Adrenal gland (tissue), 19 donors: ENCODE measurements at regions of chr3 and their contacts with region 1.

Region 1: GRCh38 chr3:126982471-126983175 is at the start of gene PLXNA1:
- DNase-seq: peak; percentile 64 to 83 (median 70)
- H3K4me3 ChIP-seq: peak within 1 kb of the TSS; percentile 37 to 98 (median 54)
- H3K27ac ChIP-seq: peak within 1 kb of the TSS in 4 of 5 donors; percentile 62 to 89 (median 74)
- H3K4me1 ChIP-seq: peaks cover 11 to 34% of the 10 kb centered on the region in 2 donors
- H3K27me3 ChIP-seq: no peaks in the 10 kb centered on the region
- CTCF ChIP-seq: peak; percentile 76 to 91 (median 86)
- POLR2A ChIP-seq: no peak
- total RNA-seq, gene PLXNA1: 9.5 to 28.4 (median 21.5) TPM

Region 2: DNA sequence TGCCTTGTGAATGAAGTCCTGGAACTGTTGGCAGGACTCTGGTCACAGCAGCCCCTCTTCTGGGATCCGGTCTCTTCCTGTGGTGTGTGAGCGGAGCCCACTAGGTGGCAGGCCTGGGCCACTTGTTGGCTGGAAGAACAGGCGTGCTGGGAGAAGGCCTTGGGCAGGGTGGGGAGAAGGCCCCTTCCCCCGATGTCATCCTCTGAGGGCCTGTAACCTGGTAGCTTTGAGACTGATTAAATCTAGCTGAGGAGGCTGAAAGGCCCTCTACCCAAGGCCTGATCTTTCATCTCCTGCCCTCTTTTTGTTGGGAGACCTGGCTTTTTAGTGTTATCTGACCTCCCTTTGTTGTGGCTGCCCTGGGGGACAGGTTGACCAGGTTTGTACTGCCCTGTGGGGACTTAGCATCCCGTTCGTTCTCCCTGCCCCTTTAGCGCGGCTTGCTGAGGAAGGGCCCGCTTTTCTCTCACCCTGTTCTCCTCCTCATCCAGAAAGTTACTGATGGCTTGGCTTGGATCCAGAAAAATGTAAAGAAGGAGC is 230.2 kb before region 1 on chr3:
- intact Hi-C with region 1: loop called (anchors 5 kb)
- DNase-seq: peak; percentile 73 to 91 (median 77)
- H3K4me3 ChIP-seq: no peak overlapping the region
- H3K27ac ChIP-seq: no peak overlapping the region
- H3K4me1 ChIP-seq: peaks cover 0 to 6% of the 10 kb centered on the region in 2 donors
- H3K27me3 ChIP-seq: no peaks in the 10 kb centered on the region
- CTCF ChIP-seq: peak; percentile 78 to 92 (median 88)
- POLR2A ChIP-seq: no peak

Region 3: DNA sequence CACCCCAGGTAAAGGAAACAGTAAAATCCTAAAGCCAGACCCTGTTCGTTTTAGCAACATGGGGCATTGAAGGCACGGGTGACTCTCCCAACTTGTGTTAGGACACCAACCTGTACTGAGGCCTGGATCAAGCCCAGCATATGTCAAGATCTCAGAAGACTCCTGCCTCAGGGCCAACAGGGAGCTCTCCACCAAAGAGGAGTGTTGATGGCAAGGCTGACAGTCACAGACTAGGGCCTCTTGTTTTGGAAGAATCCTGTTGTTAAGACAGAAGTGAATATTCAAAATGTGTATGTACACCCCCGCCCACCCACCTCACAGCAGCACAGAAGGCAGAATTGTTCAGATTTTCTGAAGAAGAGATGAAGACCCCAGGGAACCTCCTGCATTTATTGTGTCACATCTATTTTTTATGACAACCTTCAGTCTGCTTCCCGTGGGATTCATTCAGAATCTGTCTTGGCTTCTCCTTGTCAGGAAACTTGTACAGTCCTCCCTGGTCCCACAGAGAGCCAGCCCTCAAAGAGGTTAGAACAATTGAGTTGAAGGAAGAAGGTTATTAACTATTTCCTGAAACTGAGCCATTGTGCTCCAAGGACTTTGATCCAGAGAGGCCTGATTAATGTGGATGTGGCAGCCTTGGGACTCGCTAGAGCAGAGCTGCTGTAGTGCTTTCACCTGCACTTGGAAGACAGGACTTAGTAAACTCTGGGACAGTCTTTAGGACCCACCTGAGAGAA is 61.4 kb before region 1 on chr3:
- intact Hi-C with region 1: no loop called
- DNase-seq: no peak
- H3K4me3 ChIP-seq: no peak overlapping the region
- H3K27ac ChIP-seq: no peak overlapping the region
- H3K4me1 ChIP-seq: peaks cover 0 to 18% of the 10 kb centered on the region in 2 donors
- H3K27me3 ChIP-seq: no peaks in the 10 kb centered on the region
- CTCF ChIP-seq: no peak
- POLR2A ChIP-seq: no peak

Region 4: DNA sequence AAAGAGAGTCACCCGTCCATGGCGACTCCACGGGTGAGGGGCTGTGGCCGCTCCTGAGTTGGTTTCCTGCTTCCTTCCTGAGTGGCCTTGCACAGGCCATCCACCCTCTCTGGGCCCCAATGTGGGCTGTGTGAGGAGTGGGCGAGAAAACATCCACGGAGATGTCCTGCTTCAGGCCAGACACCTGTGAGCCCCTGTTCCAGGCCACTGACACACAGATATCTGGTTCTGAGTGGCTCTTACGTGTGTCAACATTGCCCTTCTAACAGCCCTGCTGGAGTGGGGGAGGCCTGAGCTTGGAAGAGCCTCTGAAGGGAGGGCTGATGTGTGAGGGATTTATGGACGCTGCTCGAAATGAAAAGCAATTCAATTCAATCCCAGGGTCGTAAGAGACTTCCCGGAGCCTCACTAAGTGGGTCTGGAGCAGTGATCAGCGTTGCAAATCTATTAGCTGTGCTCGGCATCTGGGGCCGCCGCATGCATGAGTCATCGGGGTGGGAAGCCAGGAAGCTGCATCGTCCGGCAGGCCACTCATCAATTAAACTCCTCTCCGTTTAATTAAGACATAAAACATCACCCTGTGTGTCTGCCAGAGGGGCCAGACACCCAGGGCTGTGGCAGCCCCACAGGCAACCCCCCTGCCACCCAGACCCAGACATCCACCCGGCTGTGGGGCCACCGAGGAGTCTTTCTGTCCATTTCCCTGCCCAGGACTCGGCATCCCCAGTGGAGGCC is 190.3 kb after region 1 on chr3:
- intact Hi-C with region 1: loop called in 1 of 2 experiments (anchors 10 kb)
- DNase-seq: peak in 6 of 7 donors; percentile 15 to 91 (median 38)
- H3K4me3 ChIP-seq: no peak overlapping the region
- H3K27ac ChIP-seq: peak overlapping the region in 1 of 5 donors; percentile 47
- H3K4me1 ChIP-seq: no peaks in the 10 kb centered on the region
- H3K27me3 ChIP-seq: peaks cover 4% of the 10 kb centered on the region
- CTCF ChIP-seq: no peak
- POLR2A ChIP-seq: no peak

Region 5: DNA sequence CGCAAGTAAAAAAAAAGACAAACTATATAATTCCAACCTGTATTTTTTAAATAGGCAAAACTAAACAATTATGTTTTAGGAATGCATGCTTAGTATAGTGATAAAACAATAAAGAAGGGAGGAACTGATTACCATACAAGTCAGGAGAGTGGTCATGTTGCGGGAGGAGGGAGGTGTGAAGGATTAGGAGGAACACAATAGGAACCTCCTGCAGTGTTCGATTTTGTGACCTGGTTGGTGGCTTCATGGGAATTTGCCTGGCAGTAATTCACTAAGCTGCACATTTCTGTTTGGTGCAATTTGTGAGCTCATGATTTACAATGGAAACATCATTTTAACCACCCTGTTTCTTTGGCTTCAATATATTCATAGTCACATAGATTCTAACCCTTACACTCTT is 529.6 kb after region 1 on chr3:
- intact Hi-C with region 1: no loop called
- DNase-seq: no peak
- H3K4me3 ChIP-seq: no peak overlapping the region
- H3K27ac ChIP-seq: no peak overlapping the region
- H3K4me1 ChIP-seq: no peaks in the 10 kb centered on the region
- H3K27me3 ChIP-seq: no peaks in the 10 kb centered on the region
- CTCF ChIP-seq: no peak
- POLR2A ChIP-seq: no peak